ENCODE measurements at regions of chr3 and their contacts with region 1.

Region 1: DNA sequence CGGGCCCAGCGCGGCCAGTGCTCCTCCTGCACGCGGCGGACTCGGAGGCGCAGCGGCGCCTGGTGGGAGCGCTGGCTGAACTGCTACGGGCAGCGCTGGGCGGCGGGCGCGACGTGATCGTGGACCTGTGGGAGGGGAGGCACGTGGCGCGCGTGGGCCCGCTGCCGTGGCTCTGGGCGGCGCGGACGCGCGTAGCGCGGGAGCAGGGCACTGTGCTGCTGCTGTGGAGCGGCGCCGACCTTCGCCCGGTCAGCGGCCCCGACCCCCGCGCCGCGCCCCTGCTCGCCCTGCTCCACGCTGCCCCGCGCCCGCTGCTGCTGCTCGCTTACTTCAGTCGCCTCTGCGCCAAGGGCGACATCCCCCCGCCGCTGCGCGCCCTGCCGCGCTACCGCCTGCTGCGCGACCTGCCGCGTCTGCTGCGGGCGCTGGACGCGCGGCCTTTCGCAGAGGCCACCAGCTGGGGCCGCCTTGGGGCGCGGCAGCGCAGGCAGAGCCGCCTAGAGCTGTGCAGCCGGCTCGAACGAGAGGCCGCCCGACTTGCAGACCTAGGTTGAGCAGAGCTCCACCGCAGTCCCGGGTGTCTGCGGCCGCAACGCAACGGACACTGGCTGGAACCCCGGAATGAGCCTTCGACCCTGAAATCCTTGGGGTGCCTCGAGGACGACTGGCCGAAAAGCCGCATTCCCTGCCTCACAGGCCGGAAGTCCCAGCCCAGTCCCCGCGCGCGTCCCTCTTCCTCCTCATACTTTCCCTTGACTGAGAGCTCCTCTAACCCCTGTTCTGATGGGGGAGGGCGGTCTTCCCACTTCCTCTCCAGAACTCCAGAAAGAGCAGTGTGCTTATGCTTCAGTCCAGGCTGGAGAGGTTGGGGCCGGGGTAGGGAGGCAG is 1.4 kb upstream of the IL17RC start:
- DNase-seq: peak; percentile 85 to 90
- ATAC-seq: peak; percentile 75
- H3K4me3 ChIP-seq: peak overlapping the region; percentile 44 to 52
- H3K27ac ChIP-seq: peak overlapping the region; percentile 46 to 81
- H3K4me1 ChIP-seq: no peaks in the 10 kb centered on the region
- H3K27me3 ChIP-seq: no peaks in the 10 kb centered on the region

Region 2: DNA sequence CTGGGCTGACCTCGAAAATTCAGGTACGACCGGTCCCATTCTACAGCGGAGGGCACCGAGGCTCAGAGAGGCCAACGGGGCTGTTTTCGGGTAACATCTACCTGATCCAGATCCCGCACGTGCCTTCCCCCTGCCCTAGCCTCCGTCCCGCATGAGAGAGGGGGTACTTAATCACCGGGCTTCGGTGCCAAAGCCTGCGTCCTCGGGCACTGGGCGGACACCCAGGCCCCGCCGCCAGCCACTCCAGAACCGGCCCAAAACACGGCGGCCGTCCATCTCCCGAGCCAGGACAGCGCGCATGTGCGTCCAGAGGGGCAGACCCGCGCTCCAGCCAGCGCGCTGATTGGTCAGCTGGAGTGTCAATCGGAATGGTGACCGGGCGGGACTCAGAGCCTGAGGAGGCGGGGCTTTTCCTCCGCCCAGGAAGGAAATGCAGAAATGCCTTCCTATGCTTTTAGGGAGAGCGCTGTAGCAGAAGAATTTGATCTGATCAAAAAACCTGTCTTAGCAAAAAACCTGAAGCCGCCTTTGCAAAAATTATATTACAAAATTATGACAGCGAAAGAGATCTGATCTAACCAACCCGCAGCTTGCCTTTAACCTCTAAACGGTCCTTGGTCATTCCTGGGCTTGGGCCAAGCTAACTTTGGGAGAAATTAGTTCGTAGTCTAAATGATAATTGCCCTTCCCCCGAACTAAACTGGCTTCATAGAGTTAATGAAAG is 71.6 kb before region 1 on chr3 and contains the start of gene RPUSD3:
- intact Hi-C with region 1: loop called (anchors 5 kb)
- DNase-seq: peak; percentile 98 to 99
- ATAC-seq: peak; percentile 100
- H3K4me3 ChIP-seq: peak within 1 kb of the TSS; percentile 50 to 66
- H3K27ac ChIP-seq: peak within 1 kb of the TSS in 1 of 2 donors; percentile 37
- H3K4me1 ChIP-seq: no peaks in the 10 kb centered on the region
- H3K27me3 ChIP-seq: no peaks in the 10 kb centered on the region
- total RNA-seq, gene RPUSD3: 19.8 to 28.5 TPM

Region 3: GRCh38 chr3:9890249-9891071 is 25.0 kb before region 1 on chr3 and contains the start of gene JAGN1:
- intact Hi-C with region 1: loop called in 1 of 2 experiments (anchors 2 kb)
- DNase-seq: peak; percentile 91 to 97
- ATAC-seq: peak; percentile 96
- H3K4me3 ChIP-seq: peak within 1 kb of the TSS; percentile 66 to 87
- H3K27ac ChIP-seq: peak within 1 kb of the TSS in 1 of 2 donors; percentile 98
- H3K4me1 ChIP-seq: peaks cover 0 to 4% of the 10 kb centered on the region in 2 donors
- H3K27me3 ChIP-seq: no peaks in the 10 kb centered on the region
- total RNA-seq, gene JAGN1: 19.8 to 22.7 TPM

Region 4: GRCh38 chr3:10322352-10322710 is 406.8 kb after region 1 on chr3:
- intact Hi-C with region 1: no loop called
- DNase-seq: no peak
- ATAC-seq: no peak
- H3K4me3 ChIP-seq: no peak overlapping the region
- H3K27ac ChIP-seq: no peak overlapping the region
- H3K4me1 ChIP-seq: no peaks in the 10 kb centered on the region
- H3K27me3 ChIP-seq: no peaks in the 10 kb centered on the region